Activated B cell treated with CpG ODN at 0.5 μM for 24 hours (primary cell): ENCODE measurements at regions of chr13 and their contacts with region 1.

Region 1: DNA sequence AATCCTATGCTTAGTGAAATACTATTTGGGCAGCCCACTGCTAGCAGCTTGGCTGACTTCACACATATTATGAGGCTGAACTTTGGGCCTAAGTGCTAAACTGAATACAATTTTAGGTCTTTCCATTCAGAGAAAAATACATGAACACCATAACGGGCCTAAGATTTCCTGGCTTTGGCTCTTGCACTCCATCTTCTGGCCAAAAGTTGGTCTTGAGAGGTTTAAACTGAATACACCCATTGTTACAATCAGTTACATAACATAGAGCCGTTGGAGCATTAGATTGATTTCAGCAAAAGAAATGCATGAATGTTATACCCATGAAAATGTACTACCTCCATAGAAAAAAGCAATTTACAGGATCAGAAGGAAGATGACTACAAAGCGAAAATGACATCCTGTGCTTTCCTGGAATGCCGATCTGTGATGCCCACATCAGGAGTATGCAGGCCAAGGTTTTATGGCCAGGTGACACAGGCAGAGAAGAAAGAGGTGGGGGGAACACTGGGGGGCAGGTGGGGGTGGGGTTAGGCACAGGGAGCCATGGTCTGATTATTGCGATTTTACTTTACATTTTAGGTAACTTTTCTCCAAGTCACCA is 11.1 kb upstream of the SHISA2 start:
- DNase-seq: no peak
- ATAC-seq: no peak
- H3K4me3 Mint-ChIP-seq: no peak overlapping the region
- H3K27ac Mint-ChIP-seq: no peak overlapping the region
- H3K4me1 Mint-ChIP-seq: no peaks in the 10 kb centered on the region
- H3K27me3 Mint-ChIP-seq: peaks cover 21% of the 10 kb centered on the region
- CTCF ChIP-seq: no peak

Region 2: GRCh38 chr13:25819856-25820530 is 243.0 kb before region 1 on chr13:
- CTCF ChIA-PET with region 1: no interaction called
- POLR2A ChIA-PET with region 1: no interaction called
- intact Hi-C with region 1: loop called (anchors 10 kb)
- DNase-seq: no peak
- ATAC-seq: no peak
- H3K4me3 Mint-ChIP-seq: no peak overlapping the region
- H3K27ac Mint-ChIP-seq: no peak overlapping the region
- H3K4me1 Mint-ChIP-seq: no peaks in the 10 kb centered on the region
- H3K27me3 Mint-ChIP-seq: peaks cover 4% of the 10 kb centered on the region
- CTCF ChIP-seq: no peak

Region 3: DNA sequence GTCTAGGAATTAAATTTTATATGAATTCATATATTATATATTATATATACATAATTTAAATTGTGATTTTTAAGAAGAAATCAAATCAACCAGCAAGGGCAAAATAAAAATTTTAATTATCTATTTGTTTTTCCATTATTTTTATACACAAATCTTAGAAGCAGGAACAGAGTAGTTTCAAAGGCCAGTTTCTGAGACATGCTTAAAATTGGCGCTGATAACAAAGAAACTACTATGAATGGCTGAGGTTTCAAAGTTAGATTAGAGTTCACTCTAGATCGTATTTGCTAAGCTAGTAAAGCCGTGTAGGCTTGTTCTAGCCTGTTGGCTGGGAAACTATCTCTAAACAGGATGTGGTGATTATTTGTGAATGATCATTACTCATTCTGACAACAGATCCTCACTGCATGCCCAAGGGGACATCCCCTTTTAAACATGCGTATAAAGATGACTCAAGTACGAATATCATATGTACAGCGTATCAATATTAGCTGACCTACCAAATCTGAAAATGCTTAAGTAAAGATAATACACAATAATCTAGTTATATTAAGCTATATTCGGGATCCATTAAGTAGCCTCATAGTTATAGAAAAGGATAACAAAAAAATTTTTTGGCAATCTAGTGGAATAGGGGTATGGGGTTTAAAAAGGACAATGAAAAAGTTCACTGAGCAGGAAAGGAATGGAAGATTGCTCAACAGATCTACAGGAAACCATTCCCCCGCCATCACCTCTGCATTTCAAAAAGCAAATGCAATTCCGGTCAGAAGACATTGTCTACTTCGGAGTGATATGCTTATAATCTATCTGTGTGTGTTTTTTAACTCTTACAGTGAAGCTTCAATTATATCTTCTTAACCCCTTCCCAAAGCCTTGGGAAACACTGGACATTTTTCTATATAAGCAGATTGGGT is 161.2 kb before region 1 on chr13:
- CTCF ChIA-PET with region 1: no interaction called
- POLR2A ChIA-PET with region 1: no interaction called
- intact Hi-C with region 1: no loop called
- DNase-seq: no peak
- ATAC-seq: peak; percentile 60
- H3K4me3 Mint-ChIP-seq: no peak overlapping the region
- H3K27ac Mint-ChIP-seq: no peak overlapping the region
- H3K4me1 Mint-ChIP-seq: no peaks in the 10 kb centered on the region
- H3K27me3 Mint-ChIP-seq: peaks cover 1% of the 10 kb centered on the region
- CTCF ChIP-seq: no peak